Activated CD8-positive, alpha-beta T cell treated with anti-CD3 and anti-CD28 coated beads for 36 hours (primary cell): ENCODE measurements at regions of chr4 and their contacts with region 1.

Region 1: DNA sequence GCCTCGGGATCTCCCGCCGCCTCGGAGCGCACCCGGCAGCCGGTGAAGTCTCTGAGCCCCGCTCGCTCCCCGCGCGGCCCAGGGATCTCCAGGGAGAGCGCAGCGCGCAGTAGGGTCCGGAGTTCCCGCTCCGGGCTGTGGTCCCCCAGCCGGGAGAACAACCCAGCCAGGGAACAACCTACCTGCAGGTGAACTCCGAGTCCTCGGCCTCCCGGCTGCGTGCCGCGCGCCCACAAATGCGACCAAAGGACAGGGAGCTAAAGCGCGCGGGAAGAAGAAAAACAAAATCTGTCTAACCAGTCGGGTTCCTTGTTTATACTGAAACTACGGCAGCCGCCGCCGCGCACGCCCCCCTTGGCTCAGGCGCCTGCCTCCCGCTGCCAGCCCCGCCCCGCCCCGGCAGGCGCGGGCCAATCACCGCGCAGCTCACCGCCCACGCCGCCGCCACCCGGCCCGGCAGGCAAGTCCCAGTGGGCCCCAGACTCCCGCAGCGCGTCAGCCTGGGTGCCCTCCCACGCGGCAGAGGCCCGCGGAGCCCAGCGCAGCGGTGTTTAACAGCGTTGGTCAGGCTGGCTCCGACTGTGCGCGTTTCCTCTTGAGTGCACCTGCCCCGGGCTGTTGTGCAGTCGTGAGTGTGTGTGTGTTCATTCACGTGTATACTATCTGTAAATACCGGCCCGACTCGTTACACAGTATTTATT is at the start of gene RASGEF1B:
- DNase-seq: peak; percentile 96
- ATAC-seq: peak; percentile 85
- H3K4me3 Mint-ChIP-seq: peak within 1 kb of the TSS; percentile 89
- H3K27ac Mint-ChIP-seq: peak within 1 kb of the TSS; percentile 95
- H3K4me1 Mint-ChIP-seq: peaks cover 37% of the 10 kb centered on the region
- H3K27me3 Mint-ChIP-seq: no peaks in the 10 kb centered on the region
- CTCF ChIP-seq: no peak
- total RNA-seq, gene RASGEF1B: 6.1 to 6.2 TPM

Region 2: DNA sequence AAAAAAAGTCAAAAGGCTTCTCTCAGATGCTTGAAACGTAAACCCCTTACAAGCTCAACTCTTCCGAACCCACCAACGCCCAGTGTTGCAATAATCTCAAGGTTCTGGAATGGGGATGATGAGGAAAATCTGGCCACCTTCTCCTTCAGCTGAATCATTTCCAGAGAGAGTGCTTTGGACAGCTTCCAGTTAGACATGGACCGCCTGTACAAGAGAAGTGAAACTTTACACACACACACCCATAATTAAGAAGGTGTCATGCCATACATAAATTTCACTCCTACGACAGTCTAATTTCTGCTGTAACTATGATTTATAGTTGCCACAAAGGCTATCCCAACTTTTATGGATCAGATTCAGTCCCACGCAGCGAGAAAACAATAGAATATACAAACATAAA is 329.0 kb before region 1 on chr4:
- CTCF ChIA-PET with region 1: no interaction called
- POLR2A ChIA-PET with region 1: no interaction called
- intact Hi-C with region 1: no loop called
- DNase-seq: no peak
- ATAC-seq: no peak
- H3K4me3 Mint-ChIP-seq: no peak overlapping the region
- H3K27ac Mint-ChIP-seq: no peak overlapping the region
- H3K4me1 Mint-ChIP-seq: no peaks in the 10 kb centered on the region
- H3K27me3 Mint-ChIP-seq: no peaks in the 10 kb centered on the region
- CTCF ChIP-seq: no peak

Region 3: GRCh38 chr4:81460191-81460701 is 11.5 kb before region 1 on chr4:
- CTCF ChIA-PET with region 1: interaction called, 21 read pairs
- POLR2A ChIA-PET with region 1: interaction called, 4 read pairs
- intact Hi-C with region 1: no loop called
- DNase-seq: peak; percentile 21
- ATAC-seq: peak; percentile 49
- H3K4me3 Mint-ChIP-seq: no peak overlapping the region
- H3K27ac Mint-ChIP-seq: no peak overlapping the region
- H3K4me1 Mint-ChIP-seq: peaks cover 42% of the 10 kb centered on the region
- H3K27me3 Mint-ChIP-seq: no peaks in the 10 kb centered on the region
- CTCF ChIP-seq: no peak

Region 4: GRCh38 chr4:81549984-81550383 is 78.2 kb after region 1 on chr4:
- CTCF ChIA-PET with region 1: no interaction called
- POLR2A ChIA-PET with region 1: no interaction called
- intact Hi-C with region 1: loop called (anchors 10 kb)
- DNase-seq: no peak
- ATAC-seq: no peak
- H3K4me3 Mint-ChIP-seq: no peak overlapping the region
- H3K27ac Mint-ChIP-seq: no peak overlapping the region
- H3K4me1 Mint-ChIP-seq: peaks cover 2% of the 10 kb centered on the region
- H3K27me3 Mint-ChIP-seq: no peaks in the 10 kb centered on the region
- CTCF ChIP-seq: no peak

Region 5: GRCh38 chr4:81648576-81649275 is 177.0 kb after region 1 on chr4:
- CTCF ChIA-PET with region 1: interaction called, 7 read pairs
- POLR2A ChIA-PET with region 1: interaction called, 3 read pairs
- intact Hi-C with region 1: loop called (anchors 5 kb)
- DNase-seq: peak; percentile 73
- ATAC-seq: peak; percentile 72
- H3K4me3 Mint-ChIP-seq: peak overlapping the region; percentile 31
- H3K27ac Mint-ChIP-seq: peak overlapping the region; percentile 51
- H3K4me1 Mint-ChIP-seq: peaks cover 63% of the 10 kb centered on the region
- H3K27me3 Mint-ChIP-seq: no peaks in the 10 kb centered on the region
- CTCF ChIP-seq: no peak

Region 6: GRCh38 chr4:81844717-81845116 is 373.0 kb after region 1 on chr4:
- CTCF ChIA-PET with region 1: interaction called, 156 read pairs
- POLR2A ChIA-PET with region 1: no interaction called
- intact Hi-C with region 1: loop called (anchors 1 kb)
- DNase-seq: peak; percentile 88
- ATAC-seq: peak; percentile 97
- H3K4me3 Mint-ChIP-seq: no peak overlapping the region
- H3K27ac Mint-ChIP-seq: no peak overlapping the region
- H3K4me1 Mint-ChIP-seq: peaks cover 8% of the 10 kb centered on the region
- H3K27me3 Mint-ChIP-seq: no peaks in the 10 kb centered on the region
- CTCF ChIP-seq: peak; percentile 61